Sciatic nerve (tissue), 2 donors: ENCODE measurements at regions of chr1 and their contacts with region 1.

Region 1: GRCh38 chr1:214901718-214902117 is 180.8 kb upstream of the KCNK2 start:
- DNase-seq: no peak
- ATAC-seq: no peak

Region 2: GRCh38 chr1:214912127-214912526 is 10.4 kb after region 1 on chr1:
- intact Hi-C with region 1: loop called (anchors 1 kb)
- DNase-seq: no peak
- ATAC-seq: no peak

Region 3: DNA sequence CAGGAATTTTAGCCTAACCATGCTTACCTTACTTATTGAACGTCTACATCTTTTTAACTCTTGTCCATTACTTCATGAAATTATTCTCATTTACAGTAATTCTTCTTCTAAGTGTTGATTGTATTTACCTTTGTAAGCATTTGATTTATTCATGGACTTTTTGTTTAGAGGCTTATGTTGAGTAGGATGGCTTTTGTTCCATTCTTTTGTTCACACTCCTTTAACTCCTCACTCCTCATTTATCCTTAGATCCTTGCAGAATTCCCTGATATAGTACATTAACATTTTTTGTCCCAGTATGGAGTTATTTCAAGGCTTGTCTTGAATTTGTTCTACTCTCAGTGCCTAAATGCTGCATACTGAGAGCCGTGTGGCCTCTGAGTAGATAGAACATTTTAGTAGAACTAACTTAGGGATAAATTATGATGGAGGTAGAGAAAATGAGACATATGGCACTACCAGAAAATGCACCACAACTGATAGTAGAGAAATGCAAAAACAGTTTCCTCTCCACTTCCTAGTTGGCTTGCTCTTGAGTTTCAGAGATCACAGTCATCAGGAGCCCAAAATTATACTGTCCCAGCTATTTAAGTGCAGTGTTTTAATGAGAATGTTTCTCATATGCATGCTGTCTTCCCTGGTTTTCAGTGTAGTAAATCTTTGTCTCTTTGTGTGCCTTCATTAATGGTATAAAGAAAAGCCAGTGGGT is 250.3 kb after region 1 on chr1:
- intact Hi-C with region 1: loop called (anchors 2 kb)
- DNase-seq: no peak
- ATAC-seq: no peak